Esophagus muscularis mucosa (tissue), 4 donors: ENCODE measurements at regions of chr7 and their contacts with region 1.

Region 1: GRCh38 chr7:6271060-6271658 is 1.3 kb downstream of the CYTH3 start:
- DNase-seq: no peak
- H3K4me3 ChIP-seq: peak overlapping the region; percentile 75 to 97 (median 88)
- H3K27ac ChIP-seq: peak overlapping the region; percentile 83 to 91 (median 84)
- H3K4me1 ChIP-seq: peaks cover 30 to 49% (median 42%) of the 10 kb centered on the region in 4 donors
- H3K27me3 ChIP-seq: no peaks in the 10 kb centered on the region
- CTCF ChIP-seq: peak; percentile 49 to 61 (median 59)
- EP300 ChIP-seq: no peak
- POLR2A ChIP-seq: no peak

Region 2: GRCh38 chr7:6160191-6160623 is 111.0 kb before region 1 on chr7:
- intact Hi-C with region 1: loop called (anchors 2 kb)
- DNase-seq: no peak
- H3K4me3 ChIP-seq: peak overlapping the region in 1 of 4 donors; percentile 0
- H3K27ac ChIP-seq: peak overlapping the region; percentile 35 to 71 (median 66)
- H3K4me1 ChIP-seq: peaks cover 23 to 37% (median 32%) of the 10 kb centered on the region in 4 donors
- H3K27me3 ChIP-seq: no peaks in the 10 kb centered on the region
- CTCF ChIP-seq: peak; percentile 83 to 88 (median 86)
- EP300 ChIP-seq: no peak
- POLR2A ChIP-seq: no peak

Region 3: GRCh38 chr7:6589829-6590644 is 318.9 kb after region 1 on chr7 and contains the start of gene INTS15:
- intact Hi-C with region 1: no loop called
- DNase-seq: no peak
- H3K4me3 ChIP-seq: peak within 1 kb of the TSS; percentile 84 to 92 (median 88)
- H3K27ac ChIP-seq: peak within 1 kb of the TSS; percentile 84 to 92 (median 87)
- H3K4me1 ChIP-seq: peaks cover 13 to 24% (median 21%) of the 10 kb centered on the region in 4 donors
- H3K27me3 ChIP-seq: no peaks in the 10 kb centered on the region
- CTCF ChIP-seq: peak; percentile 84 to 93 (median 90)
- EP300 ChIP-seq: no peak
- POLR2A ChIP-seq: no peak
- total RNA-seq, gene INTS15: 22.5 to 38.9 (median 33.5) TPM